Panc1 (cell line): ENCODE measurements at regions of chrX and their contacts with region 1.

Region 1: DNA sequence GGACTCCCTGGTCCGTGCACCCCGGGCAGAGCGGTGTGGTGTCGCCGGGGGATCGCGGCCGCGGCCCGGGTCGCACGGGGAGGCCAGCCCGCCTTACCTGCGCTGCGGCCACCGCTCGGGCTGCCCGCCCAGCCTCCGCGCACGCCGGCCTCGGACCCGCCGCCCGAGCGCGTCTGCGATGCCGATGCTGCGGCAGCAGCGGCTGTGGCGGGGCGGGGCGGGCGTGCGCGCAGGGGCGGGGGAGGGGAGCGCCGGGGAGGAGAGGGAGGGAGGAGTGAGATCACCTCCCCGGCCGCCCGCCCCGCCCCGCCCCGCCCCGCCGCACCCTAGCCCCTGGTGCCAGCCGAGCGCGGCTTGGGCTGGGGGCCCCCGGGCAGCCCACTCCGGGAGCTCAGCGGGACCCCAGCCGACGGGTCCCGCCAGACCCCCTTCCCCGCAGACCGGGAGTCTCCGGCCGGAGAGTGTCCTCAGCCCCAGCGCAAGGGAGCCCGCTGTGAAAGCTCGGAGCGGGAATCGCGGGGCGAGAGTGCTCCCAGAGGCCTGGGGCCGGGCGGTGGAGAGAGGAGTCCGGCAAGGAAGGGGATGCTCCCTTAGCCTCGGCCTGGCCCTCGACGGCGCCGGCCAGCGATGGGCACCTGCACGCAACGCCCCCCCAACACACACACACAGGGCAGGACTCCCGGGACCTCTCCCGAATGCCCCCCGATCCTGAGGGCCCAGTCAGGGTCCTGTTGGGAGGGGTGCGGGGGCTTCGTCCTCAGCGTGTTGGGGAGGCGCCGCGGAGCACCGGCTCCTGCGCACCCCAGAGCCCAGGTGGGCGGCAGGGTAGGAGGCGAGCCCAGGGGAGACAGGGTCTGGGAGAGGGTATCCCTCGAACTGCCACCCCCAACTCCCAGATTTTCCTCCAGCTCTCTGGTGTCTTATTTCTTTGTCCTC is at the start of gene L1CAM:
- DNase-seq: no peak
- ATAC-seq: peak; percentile 56
- H3K4me3 ChIP-seq: peak within 1 kb of the TSS; percentile 62 to 74
- H3K27ac ChIP-seq: peak within 1 kb of the TSS; percentile 89
- H3K4me1 ChIP-seq: peaks cover 57% of the 10 kb centered on the region
- H3K27me3 ChIP-seq: no peaks in the 10 kb centered on the region
- CTCF ChIP-seq: no peak
- total RNA-seq, gene L1CAM: 819 TPM

Region 2: GRCh38 chrX:153687121-153688039 is 198.9 kb before region 1 on chrX and contains the start of gene SLC6A8:
- CTCF ChIA-PET with region 1: interaction called, 10 read pairs
- POLR2A ChIA-PET with region 1: no interaction called
- in situ Hi-C with region 1: no loop called
- intact Hi-C with region 1: no loop called
- DNase-seq: no peak
- ATAC-seq: peak; percentile 68
- H3K4me3 ChIP-seq: peak within 1 kb of the TSS; percentile 48 to 50
- H3K27ac ChIP-seq: peak within 1 kb of the TSS; percentile 51; the same call in 1 of the 2 replicates
- H3K4me1 ChIP-seq: peaks cover 30% of the 10 kb centered on the region
- H3K27me3 ChIP-seq: no peaks in the 10 kb centered on the region
- CTCF ChIP-seq: peak; percentile 61
- total RNA-seq, gene SLC6A8: 125 TPM

Region 3: DNA sequence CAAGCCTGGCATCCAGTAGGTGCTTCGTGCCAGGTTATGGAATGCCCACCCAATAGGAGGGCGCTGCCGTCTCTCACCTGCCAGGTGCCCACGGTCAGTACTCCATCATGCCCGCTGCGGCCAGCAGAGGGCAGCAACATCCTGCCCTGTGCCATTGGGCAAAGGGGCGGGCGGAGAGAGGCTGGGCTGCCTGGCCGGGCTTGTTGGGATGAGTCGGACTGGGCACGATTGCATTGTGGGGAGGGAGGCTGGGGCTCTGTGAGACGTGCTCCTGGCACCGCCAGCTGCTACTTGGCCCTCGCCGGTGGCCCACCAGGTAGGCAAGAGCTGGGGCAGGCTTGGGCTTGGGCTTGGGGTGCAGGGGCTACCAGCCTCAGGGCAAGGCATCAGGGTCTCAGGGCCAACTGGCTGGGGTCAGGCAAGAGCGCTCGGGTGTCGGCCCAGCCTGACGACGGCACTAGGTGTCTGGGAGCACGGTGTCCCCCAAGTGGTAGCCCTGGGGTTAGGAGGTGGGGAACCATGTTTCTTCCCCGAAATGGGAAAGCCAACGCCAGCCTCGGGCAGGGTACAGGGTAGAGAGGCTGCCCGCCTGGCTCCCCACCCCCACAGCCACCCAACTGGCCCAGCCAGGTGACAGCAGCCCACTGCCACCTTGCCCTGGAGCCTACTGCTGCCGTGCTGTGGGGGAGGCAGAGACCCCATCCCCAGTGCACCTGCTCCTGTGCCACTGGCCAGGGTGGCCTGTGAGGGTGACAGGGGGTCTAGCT is 122.1 kb before region 1 on chrX and contains the start of gene PLXNB3:
- CTCF ChIA-PET with region 1: no interaction called
- POLR2A ChIA-PET with region 1: no interaction called
- in situ Hi-C with region 1: no loop called
- intact Hi-C with region 1: loop called (anchors 10 kb)
- DNase-seq: peak; percentile 38
- ATAC-seq: peak; percentile 82
- H3K4me3 ChIP-seq: peak within 1 kb of the TSS; percentile 30 to 48
- H3K27ac ChIP-seq: peak within 1 kb of the TSS; percentile 81
- H3K4me1 ChIP-seq: peaks cover 25% of the 10 kb centered on the region
- H3K27me3 ChIP-seq: no peaks in the 10 kb centered on the region
- CTCF ChIP-seq: no peak
- total RNA-seq, gene PLXNB3: 14.3 TPM

Region 4: DNA sequence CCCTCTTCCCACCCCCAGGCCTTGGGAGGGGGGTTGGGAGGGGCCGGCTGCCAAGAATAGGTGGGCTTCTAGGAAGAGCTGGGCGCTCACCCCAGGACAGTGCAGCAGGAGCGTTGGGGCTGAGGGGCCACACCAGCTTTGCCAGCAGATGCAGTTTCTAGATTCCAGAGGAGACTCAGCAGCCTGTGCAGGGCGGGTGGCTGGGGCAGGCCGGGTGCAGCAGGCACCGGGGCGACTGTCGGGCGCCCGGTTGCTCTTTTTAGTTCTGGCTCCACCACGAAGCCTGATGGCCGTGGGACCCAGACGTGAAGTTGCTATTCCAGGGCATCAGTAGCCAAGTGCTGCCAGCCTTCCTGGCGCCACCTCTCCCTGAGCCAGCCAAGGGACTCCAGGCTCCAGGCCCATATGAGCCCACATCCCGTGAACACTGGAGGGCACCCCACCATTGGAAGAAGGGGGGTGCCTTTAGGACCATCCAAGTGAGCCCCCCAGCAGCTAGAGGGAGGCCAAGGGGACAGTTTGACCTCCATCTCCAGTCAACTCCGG is 86.0 kb before region 1 on chrX:
- CTCF ChIA-PET with region 1: interaction called, 4 read pairs
- POLR2A ChIA-PET with region 1: no interaction called
- in situ Hi-C with region 1: no loop called
- intact Hi-C with region 1: loop called (anchors 10 kb)
- DNase-seq: no peak
- ATAC-seq: peak; percentile 47
- H3K4me3 ChIP-seq: no peak overlapping the region
- H3K27ac ChIP-seq: no peak overlapping the region
- H3K4me1 ChIP-seq: peaks cover 10% of the 10 kb centered on the region
- H3K27me3 ChIP-seq: no peaks in the 10 kb centered on the region
- CTCF ChIP-seq: no peak

Region 5: DNA sequence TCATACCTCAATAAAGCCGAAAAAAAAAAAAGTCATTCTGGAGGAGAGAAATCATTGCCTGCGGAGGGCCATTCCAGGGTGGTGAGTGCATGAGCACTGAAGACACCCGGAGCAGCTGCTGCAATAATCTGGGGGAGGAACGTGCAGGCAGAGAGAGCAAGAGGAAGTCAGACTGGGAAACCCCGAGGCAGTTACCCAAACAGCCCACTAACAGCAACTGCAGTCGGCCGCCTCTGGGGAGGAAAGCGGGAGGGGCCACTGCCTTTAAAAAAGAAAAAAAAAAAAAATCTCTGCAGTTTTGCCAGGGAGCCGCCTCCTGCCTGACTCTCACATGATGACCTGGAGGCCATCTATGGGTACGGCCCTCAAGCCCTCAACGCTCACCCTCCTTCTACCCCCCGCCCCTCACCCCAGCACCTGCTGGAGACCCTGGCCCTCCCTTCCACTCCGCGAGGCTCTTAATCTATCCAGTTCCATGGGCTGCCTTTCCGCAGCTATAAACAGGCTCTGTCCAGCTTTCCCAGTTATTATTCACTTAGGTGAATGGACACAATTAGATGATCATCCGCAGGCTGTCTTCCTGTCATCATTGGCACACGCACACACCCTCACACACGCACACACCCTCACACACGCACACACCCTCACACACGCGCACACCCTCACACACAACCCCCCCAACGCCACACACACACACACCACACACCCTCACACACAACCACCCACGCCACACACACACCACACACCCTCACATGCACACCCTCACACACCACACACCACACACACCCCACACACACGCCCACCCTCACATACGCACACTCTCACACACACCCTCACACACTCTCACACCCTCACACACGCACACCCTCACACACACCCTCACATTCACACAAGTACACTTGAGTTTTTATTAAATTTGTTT is 14.9 kb after region 1 on chrX:
- CTCF ChIA-PET with region 1: interaction called, 14 read pairs
- POLR2A ChIA-PET with region 1: interaction called, 4 read pairs
- in situ Hi-C with region 1: no loop called
- intact Hi-C with region 1: no loop called
- DNase-seq: no peak
- ATAC-seq: peak; percentile 69
- H3K4me3 ChIP-seq: peak overlapping the region in 1 of 2 experiments; percentile 25; a peak in 1 of 4 replicates
- H3K27ac ChIP-seq: peak overlapping the region; percentile 76
- H3K4me1 ChIP-seq: peaks cover 47% of the 10 kb centered on the region
- H3K27me3 ChIP-seq: no peaks in the 10 kb centered on the region
- CTCF ChIP-seq: no peak